Mammary epithelial cell (primary cell): ENCODE measurements at regions of chr20 and their contacts with region 1.

Region 1: GRCh38 chr20:54340667-54341081 is 132.8 kb downstream of the PFDN4 start:
- DNase-seq: no peak
- H3K4me3 ChIP-seq: no peak overlapping the region
- H3K27ac ChIP-seq: no peak overlapping the region
- H3K4me1 ChIP-seq: peaks cover 3% of the 10 kb centered on the region
- H3K27me3 ChIP-seq: no peaks in the 10 kb centered on the region
- CTCF ChIP-seq: no peak

Region 2: DNA sequence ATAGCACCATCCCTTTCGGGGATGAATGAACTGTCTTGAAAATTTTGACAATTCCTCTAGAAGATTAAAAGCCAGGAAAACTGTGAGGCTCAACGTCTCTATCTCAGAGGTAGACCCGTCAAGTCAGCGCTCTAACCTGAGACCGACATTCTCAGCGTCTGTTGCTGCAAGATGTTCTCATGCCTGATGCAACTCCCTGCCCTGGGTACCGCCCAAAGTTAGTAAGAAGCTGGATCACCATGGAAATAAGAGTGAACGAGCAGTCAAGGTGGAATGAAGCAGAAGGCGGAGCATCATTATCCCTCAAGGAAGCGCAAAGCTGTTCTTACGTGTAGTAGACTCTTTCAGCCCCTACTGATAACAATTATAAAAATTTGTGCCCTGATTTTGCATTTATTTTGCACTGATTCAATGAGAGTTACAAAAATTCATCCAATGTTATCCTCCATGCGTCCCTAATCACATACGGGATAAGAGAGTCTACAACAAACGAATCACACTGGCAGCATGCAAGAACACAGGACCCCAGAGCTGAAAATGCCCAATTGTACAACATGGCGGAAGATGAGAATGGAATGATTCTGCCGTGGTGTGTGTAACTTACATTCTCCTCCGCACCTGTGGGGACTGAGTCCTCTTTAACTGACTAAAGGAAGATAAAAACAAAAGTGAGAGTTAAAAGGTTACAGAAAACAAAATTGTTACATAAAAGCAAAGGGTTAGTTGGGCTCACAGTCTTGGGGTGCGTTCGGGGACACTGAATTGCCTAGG is 365.7 kb before region 1 on chr20:
- CTCF ChIA-PET with region 1: no interaction called
- dilution Hi-C with region 1: no loop called
- in situ Hi-C with region 1: no loop called
- intact Hi-C with region 1: no loop called
- DNase-seq: no peak
- H3K4me3 ChIP-seq: no peak overlapping the region
- H3K27ac ChIP-seq: no peak overlapping the region
- H3K4me1 ChIP-seq: no peaks in the 10 kb centered on the region
- H3K27me3 ChIP-seq: no peaks in the 10 kb centered on the region
- CTCF ChIP-seq: no peak

Region 3: GRCh38 chr20:54257071-54257840 is 83.4 kb before region 1 on chr20:
- CTCF ChIA-PET with region 1: no interaction called
- dilution Hi-C with region 1: loop called (anchors 5 kb)
- in situ Hi-C with region 1: no loop called
- intact Hi-C with region 1: no loop called
- DNase-seq: peak; percentile 92
- H3K4me3 ChIP-seq: no peak overlapping the region
- H3K27ac ChIP-seq: peak overlapping the region; percentile 44
- H3K4me1 ChIP-seq: peaks cover 29% of the 10 kb centered on the region
- H3K27me3 ChIP-seq: no peaks in the 10 kb centered on the region
- CTCF ChIP-seq: no peak